ENCODE measurements at regions of chr14 and their contacts with region 1.

Region 1: DNA sequence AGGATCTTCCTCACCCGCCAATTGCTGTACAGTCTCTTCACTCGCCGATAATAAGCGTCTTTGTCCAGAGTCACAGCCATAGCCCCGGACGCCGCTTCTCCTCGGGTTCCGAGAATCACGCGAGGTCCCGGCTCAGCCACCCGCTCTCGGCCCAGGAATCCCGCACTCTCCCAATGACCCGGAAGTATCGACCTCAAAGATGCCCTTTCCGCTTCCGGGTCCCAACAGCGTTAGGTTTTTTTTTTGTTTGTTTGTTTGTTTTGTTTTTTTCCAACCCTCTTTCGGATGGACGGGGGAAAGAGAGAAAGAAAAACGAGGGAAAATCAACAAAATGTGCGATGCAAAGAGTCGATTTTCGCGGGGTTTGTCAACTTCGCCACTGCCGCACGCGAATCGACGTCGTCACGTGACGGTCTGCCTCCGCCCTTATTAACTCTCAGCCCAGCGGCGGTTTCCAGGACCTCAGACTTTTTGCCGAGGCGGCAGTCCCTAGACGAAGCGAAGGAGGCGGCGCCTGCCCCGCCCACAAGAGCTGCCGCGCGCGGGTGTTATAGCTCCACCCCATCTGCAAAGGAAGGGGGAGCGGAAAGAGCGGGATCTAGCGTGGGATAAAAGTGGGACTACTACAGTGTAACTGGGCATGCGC is at the start of gene SUPT16H:
- DNase-seq: peak; percentile 92
- H3K4me3 Mint-ChIP-seq: peak within 1 kb of the TSS; percentile 96
- H3K27ac Mint-ChIP-seq: peak within 1 kb of the TSS; percentile 100
- H3K4me1 Mint-ChIP-seq: peaks cover 40% of the 10 kb centered on the region
- H3K27me3 Mint-ChIP-seq: no peaks in the 10 kb centered on the region
- total RNA-seq, gene SUPT16H: 162 and 166 TPM in 2 replicates

Region 2: DNA sequence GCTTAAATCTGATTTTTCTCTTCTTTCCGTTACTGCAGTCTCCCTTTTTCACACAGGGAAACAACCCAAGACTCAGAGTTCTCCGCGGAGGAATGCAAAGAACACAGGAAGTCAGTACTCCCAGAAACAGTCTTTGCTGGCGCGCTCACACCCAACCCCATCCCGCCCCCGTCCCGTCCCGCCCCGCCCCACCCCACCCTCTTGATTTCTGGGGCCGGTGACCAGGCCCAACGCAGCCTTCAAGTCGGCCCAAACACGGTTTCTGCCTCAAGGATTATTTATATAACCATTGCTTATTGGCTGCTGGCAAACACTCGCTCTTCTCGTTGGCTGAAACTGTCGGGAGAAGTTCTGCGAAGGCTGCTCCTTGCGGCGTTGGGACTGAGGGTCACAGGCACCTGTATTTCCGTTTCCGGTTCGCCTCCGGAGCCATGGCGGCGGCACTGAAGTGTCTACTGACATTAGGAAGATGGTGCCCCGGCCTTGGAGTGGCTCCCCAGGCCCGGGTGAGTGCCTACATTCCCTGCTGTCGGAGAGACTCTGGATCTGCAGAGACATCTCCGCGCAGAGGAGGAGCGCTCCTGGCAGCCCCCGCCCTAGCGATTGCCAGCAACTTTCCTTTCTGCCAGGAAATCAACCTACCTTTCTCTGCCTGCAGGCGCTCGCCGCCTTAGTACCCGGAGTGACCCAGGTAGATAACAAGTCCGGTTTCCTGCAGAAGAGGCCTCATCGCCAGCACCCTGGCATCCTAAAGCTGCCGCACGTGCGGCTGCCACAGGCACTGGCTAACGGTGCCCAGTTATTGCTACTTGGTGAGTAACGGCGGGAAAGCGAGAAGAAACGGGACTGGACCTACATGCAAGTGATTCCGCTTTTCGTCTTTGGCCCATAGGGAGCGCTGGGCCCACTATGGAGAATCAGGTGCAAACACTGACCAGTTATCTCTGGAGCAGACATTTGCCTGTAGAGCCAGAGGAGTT is 394.1 kb before region 1 on chr14 and contains the start of gene METTL17:
- intact Hi-C with region 1: loop called (anchors 1 kb)
- DNase-seq: peak; percentile 83
- H3K4me3 Mint-ChIP-seq: peak within 1 kb of the TSS; percentile 96
- H3K27ac Mint-ChIP-seq: peak within 1 kb of the TSS; percentile 85
- H3K4me1 Mint-ChIP-seq: peaks cover 25% of the 10 kb centered on the region
- H3K27me3 Mint-ChIP-seq: no peaks in the 10 kb centered on the region
- total RNA-seq, gene METTL17: 96.1 and 100 TPM in 2 replicates

Region 3: DNA sequence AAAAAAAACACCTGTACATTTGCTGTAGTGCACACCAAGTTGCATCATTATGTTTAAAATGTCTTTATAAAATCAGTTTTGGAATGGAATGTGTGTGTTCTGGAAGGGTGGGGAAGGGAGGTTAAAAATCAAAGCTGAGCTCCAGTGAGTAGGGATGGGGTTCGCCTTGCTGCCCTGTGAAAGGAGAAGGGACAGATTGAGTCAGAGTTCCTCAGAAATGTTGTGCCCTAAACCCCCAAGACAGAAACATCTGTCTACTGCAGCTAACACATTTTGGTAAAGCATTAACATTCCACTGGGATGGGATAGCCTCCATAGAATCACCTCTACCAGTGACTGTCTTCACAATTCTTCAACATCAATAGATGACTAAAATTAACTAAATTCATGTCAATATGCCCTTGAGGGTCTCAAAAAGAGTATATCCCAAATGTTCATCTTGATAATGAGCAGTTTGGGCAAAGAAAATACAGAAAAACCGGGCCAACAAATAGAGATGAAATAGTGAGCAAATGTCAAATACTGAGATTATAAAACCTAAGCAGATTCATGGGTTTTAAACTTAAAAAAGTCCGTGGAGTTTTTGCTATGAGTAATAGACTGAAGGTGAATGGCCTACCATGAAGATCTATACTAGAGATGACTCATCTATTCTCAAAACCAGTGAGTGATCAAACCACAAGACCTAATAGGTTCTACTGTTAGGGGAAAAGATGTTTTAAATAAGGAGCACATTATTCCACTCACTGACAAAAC is 120.1 kb before region 1 on chr14:
- intact Hi-C with region 1: loop called (anchors 1 kb)
- DNase-seq: no peak
- H3K4me3 Mint-ChIP-seq: peak overlapping the region; percentile 99
- H3K27ac Mint-ChIP-seq: peak overlapping the region; percentile 91
- H3K4me1 Mint-ChIP-seq: peaks cover 70% of the 10 kb centered on the region
- H3K27me3 Mint-ChIP-seq: no peaks in the 10 kb centered on the region

Region 4: DNA sequence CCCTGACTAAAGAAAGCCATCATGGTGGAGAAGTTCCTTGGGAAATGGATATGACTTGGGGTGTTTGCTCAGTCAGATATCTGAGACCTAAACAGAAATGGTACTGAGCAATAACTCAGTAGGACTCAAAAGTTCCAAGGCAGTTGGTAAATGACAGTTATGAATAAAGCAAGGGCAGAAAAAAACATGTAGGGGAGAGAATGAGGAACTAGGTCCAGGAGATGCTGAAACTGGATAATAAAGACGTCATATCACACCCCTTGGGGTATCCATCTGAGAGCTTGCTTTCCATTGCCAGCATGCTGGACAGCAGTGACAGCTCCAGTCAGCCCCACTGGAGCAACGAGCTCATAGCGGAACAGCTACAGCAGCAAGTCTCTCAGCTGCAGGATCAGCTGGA is 66.6 kb before region 1 on chr14:
- intact Hi-C with region 1: no loop called
- DNase-seq: no peak
- H3K4me3 Mint-ChIP-seq: no peak overlapping the region
- H3K27ac Mint-ChIP-seq: no peak overlapping the region
- H3K4me1 Mint-ChIP-seq: peaks cover 11% of the 10 kb centered on the region
- H3K27me3 Mint-ChIP-seq: peaks cover 7% of the 10 kb centered on the region

Region 5: DNA sequence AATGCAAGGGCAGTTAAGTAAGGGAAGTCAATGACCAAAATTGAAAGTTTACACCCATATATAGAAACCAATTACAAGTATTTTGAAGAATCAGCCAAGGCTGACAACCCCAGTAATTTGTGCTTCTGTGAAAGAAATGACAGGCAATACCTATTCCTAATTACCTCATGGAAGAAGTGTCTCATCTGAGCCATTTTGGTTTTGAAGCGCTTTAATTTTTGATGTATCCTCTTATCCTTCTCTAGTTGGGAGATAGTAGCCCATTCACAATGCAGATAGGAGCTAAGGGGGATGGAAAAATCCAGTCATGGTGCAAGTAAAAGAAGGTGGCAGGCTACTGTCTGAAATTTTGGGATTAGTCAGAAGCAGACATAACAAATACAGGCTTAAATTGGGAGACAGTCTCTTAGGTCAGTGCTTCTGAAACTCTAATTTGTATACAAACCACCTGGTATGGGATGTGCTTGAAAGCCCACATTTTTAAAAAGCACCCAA is 30.2 kb after region 1 on chr14:
- intact Hi-C with region 1: loop called (anchors 1 kb)
- DNase-seq: no peak
- H3K4me3 Mint-ChIP-seq: peak overlapping the region; percentile 19
- H3K27ac Mint-ChIP-seq: peak overlapping the region; percentile 92
- H3K4me1 Mint-ChIP-seq: peaks cover 26% of the 10 kb centered on the region
- H3K27me3 Mint-ChIP-seq: no peaks in the 10 kb centered on the region

Region 6: GRCh38 chr14:21476925-21477681 is 93.1 kb after region 1 on chr14 and contains the starts of genes RAB2B and TOX4:
- intact Hi-C with region 1: loop called (anchors 1 kb)
- DNase-seq: peak; percentile 96
- H3K4me3 Mint-ChIP-seq: peak within 1 kb of the TSS; percentile 100
- H3K27ac Mint-ChIP-seq: peak within 1 kb of the TSS; percentile 99
- H3K4me1 Mint-ChIP-seq: peaks cover 35% of the 10 kb centered on the region
- H3K27me3 Mint-ChIP-seq: peaks cover 2% of the 10 kb centered on the region
- total RNA-seq, gene RAB2B: 30.3 and 32.5 TPM in 2 replicates
- total RNA-seq, gene TOX4: 77.5 and 86.6 TPM in 2 replicates

Region 7: GRCh38 chr14:21543521-21543960 is 159.6 kb after region 1 on chr14:
- intact Hi-C with region 1: no loop called
- DNase-seq: no peak
- H3K4me3 Mint-ChIP-seq: no peak overlapping the region
- H3K27ac Mint-ChIP-seq: no peak overlapping the region
- H3K4me1 Mint-ChIP-seq: no peaks in the 10 kb centered on the region
- H3K27me3 Mint-ChIP-seq: peaks cover 17% of the 10 kb centered on the region

Region 8: GRCh38 chr14:21557084-21557901 is 173.3 kb after region 1 on chr14:
- intact Hi-C with region 1: loop called (anchors 1 kb)
- DNase-seq: peak; percentile 62
- H3K4me3 Mint-ChIP-seq: no peak overlapping the region
- H3K27ac Mint-ChIP-seq: peak overlapping the region; percentile 68
- H3K4me1 Mint-ChIP-seq: peaks cover 8% of the 10 kb centered on the region
- H3K27me3 Mint-ChIP-seq: no peaks in the 10 kb centered on the region